Natural killer cell (primary cell): ENCODE measurements at regions of chr1 and their contacts with region 1.

Region 1: DNA sequence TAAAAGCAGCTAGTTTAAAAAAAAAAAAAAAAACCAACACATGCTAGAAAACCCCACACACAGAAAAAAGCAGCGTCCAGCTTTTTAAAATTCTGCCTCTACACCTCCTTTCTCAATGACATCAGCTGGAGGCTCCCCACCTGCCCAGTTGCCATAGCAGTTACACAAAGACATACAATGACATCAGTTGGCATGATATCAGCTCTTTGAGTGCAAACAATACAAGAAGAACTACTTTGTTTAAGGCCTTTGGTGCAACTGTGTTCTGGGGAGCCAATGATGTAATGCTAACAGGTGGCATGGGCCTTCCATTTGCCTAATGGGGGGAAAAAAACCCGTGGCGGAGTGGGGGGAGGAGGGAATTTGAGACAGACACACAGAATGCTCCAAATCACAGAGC is 32.9 kb downstream of the DUSP10 start:
- DNase-seq: peak; percentile 48 to 87
- ATAC-seq: peak; percentile 41 to 61 (median 54)
- H3K4me3 ChIP-seq: no peak overlapping the region
- H3K4me3 Mint-ChIP-seq: peak overlapping the region; percentile 62
- H3K27ac ChIP-seq: peak overlapping the region; percentile 83
- H3K27ac Mint-ChIP-seq: peak overlapping the region; percentile 91 to 99
- H3K4me1 ChIP-seq: peaks cover 57% of the 10 kb centered on the region
- H3K4me1 Mint-ChIP-seq: peaks cover 80 to 84% of the 10 kb centered on the region in 2 donors
- H3K27me3 ChIP-seq: no peaks in the 10 kb centered on the region
- H3K27me3 Mint-ChIP-seq: no peaks in the 10 kb centered on the region
- CTCF ChIP-seq: no peak

Region 2: GRCh38 chr1:221327954-221328353 is 381.0 kb before region 1 on chr1:
- intact Hi-C with region 1: no loop called
- DNase-seq: no peak
- ATAC-seq: no peak
- H3K4me3 ChIP-seq: no peak overlapping the region
- H3K4me3 Mint-ChIP-seq: no peak overlapping the region
- H3K27ac ChIP-seq: no peak overlapping the region
- H3K27ac Mint-ChIP-seq: no peak overlapping the region
- H3K4me1 ChIP-seq: no peaks in the 10 kb centered on the region
- H3K4me1 Mint-ChIP-seq: no peaks in the 10 kb centered on the region
- H3K27me3 ChIP-seq: no peaks in the 10 kb centered on the region
- H3K27me3 Mint-ChIP-seq: peaks cover 18 to 20% of the 10 kb centered on the region in 2 donors
- CTCF ChIP-seq: no peak

Region 3: GRCh38 chr1:221522529-221522940 is 186.5 kb before region 1 on chr1:
- intact Hi-C with region 1: loop called (anchors 1 kb)
- DNase-seq: no peak
- ATAC-seq: peak in 1 of 3 donors; percentile 42
- H3K4me3 ChIP-seq: no peak overlapping the region
- H3K4me3 Mint-ChIP-seq: no peak overlapping the region
- H3K27ac ChIP-seq: no peak overlapping the region
- H3K27ac Mint-ChIP-seq: peak overlapping the region; percentile 89 to 94
- H3K4me1 ChIP-seq: peaks cover 19% of the 10 kb centered on the region
- H3K4me1 Mint-ChIP-seq: peaks cover 24 to 25% of the 10 kb centered on the region in 2 donors
- H3K27me3 ChIP-seq: no peaks in the 10 kb centered on the region
- H3K27me3 Mint-ChIP-seq: no peaks in the 10 kb centered on the region
- CTCF ChIP-seq: no peak

Region 4: GRCh38 chr1:221725735-221726672 is 17.0 kb after region 1 on chr1:
- intact Hi-C with region 1: loop called (anchors 1 kb)
- DNase-seq: peak in 1 of 2 donors; percentile 45
- ATAC-seq: peak; percentile 46 to 77 (median 58)
- H3K4me3 ChIP-seq: no peak overlapping the region
- H3K4me3 Mint-ChIP-seq: peak overlapping the region; percentile 74
- H3K27ac ChIP-seq: peak overlapping the region; percentile 77
- H3K27ac Mint-ChIP-seq: peak overlapping the region; percentile 82 to 88
- H3K4me1 ChIP-seq: peaks cover 46% of the 10 kb centered on the region
- H3K4me1 Mint-ChIP-seq: peaks cover 81 to 91% of the 10 kb centered on the region in 2 donors
- H3K27me3 ChIP-seq: no peaks in the 10 kb centered on the region
- H3K27me3 Mint-ChIP-seq: no peaks in the 10 kb centered on the region
- CTCF ChIP-seq: no peak

Region 5: DNA sequence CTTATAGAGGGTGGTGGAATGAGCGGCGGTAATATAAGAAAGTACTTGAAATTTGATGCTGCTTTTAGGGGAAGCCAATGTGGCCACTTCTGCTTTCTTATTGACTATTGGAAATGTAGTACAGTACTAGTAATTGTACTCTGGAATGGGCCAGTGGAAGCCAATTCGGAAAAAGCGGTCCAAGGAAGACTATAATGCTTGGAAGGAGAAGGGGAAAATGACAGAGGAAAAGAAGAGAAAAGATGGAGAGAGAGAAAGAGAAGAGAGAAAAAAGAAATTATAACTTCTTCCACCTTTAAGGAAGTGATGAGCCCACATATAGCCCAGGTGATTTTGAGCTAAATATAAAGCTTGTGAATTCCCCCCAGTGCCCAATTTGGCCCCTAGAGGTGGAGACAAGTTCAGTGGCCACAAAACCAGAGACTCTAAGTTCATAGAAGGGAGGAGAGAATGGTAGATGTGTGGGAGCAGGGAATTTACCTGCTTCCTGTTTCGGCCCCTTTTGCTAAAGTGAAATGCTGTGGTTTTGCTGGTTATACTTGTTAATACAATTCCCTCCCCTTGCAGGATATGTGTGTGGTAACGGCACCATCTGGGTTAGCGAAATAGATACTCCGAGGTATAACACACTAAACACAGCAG is 68.6 kb after region 1 on chr1:
- intact Hi-C with region 1: loop called (anchors 1 kb)
- DNase-seq: peak; percentile 42 to 88
- ATAC-seq: peak; percentile 63 to 85 (median 81)
- H3K4me3 ChIP-seq: no peak overlapping the region
- H3K4me3 Mint-ChIP-seq: peak overlapping the region; percentile 68
- H3K27ac ChIP-seq: peak overlapping the region; percentile 84
- H3K27ac Mint-ChIP-seq: peak overlapping the region; percentile 90 to 99
- H3K4me1 ChIP-seq: peaks cover 62% of the 10 kb centered on the region
- H3K4me1 Mint-ChIP-seq: peaks cover 67 to 71% of the 10 kb centered on the region in 2 donors
- H3K27me3 ChIP-seq: no peaks in the 10 kb centered on the region
- H3K27me3 Mint-ChIP-seq: no peaks in the 10 kb centered on the region
- CTCF ChIP-seq: no peak

Region 6: DNA sequence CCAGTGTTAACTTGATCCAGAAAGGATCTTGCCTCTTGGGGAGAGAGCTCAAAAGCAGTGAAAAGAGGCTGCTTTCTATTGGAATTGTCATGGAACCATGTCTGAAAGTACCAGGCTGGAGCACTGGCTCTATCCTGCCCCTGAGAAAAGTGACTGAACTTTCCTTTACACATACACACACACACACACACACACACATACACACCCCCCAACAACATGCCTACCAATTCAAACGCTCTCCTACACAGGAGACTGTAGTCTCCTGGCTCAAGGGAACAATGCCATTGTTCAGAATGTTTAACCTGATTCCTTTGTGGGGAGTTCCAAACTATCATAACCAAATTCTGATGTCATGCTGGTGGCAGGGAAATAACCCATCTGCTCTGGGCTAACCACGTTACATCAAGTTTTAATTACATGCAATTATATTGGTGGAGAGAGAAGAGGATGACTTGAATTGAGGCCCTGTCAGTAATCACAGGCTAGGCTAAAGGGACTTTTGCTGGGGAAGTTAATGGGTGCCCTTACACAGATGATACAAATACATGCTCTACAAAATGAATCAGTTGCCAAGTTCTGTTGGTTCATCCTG is 85.2 kb after region 1 on chr1:
- intact Hi-C with region 1: loop called (anchors 1 kb)
- DNase-seq: peak in 1 of 2 donors; percentile 79
- ATAC-seq: peak; percentile 76 to 89 (median 82)
- H3K4me3 ChIP-seq: no peak overlapping the region
- H3K4me3 Mint-ChIP-seq: peak overlapping the region; percentile 65
- H3K27ac ChIP-seq: peak overlapping the region; percentile 57
- H3K27ac Mint-ChIP-seq: peak overlapping the region; percentile 88 to 90
- H3K4me1 ChIP-seq: peaks cover 16% of the 10 kb centered on the region
- H3K4me1 Mint-ChIP-seq: peaks cover 19 to 26% of the 10 kb centered on the region in 2 donors
- H3K27me3 ChIP-seq: no peaks in the 10 kb centered on the region
- H3K27me3 Mint-ChIP-seq: no peaks in the 10 kb centered on the region
- CTCF ChIP-seq: no peak

Region 7: DNA sequence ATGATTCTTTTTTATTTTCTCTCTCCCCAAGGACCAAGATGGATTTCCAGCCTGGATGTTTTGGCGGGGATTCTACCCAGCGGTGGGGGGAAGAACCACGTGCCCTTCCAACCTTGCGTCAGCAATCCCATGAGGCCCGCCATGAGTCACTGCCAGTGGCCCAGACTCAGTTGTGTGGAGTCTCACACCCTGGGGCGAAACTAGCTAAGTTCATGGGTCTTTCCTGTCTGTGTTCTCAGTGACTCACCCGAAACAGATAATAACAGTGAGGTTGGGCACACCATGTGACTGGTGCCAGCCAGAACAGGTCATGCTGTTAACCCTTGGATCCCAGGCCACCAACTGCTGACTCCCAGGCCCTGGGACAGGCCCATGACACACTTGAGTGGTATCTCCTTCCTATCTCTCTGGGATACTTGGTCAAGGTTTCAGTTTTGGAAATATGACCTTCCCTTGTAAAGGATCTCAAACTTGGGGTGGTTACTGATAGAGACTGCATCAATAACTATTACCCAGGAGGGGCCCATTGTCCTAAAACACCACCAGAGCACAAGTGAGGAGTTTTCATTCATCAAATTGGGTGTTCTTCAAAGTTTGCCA is 130.9 kb after region 1 on chr1:
- intact Hi-C with region 1: loop called (anchors 1 kb)
- DNase-seq: peak; percentile 82 to 86
- ATAC-seq: peak; percentile 82 to 94 (median 93)
- H3K4me3 ChIP-seq: no peak overlapping the region
- H3K4me3 Mint-ChIP-seq: peak overlapping the region; percentile 13
- H3K27ac ChIP-seq: peak overlapping the region; percentile 34
- H3K27ac Mint-ChIP-seq: peak overlapping the region; percentile 89 to 92
- H3K4me1 ChIP-seq: peaks cover 28% of the 10 kb centered on the region
- H3K4me1 Mint-ChIP-seq: peaks cover 37 to 43% of the 10 kb centered on the region in 2 donors
- H3K27me3 ChIP-seq: no peaks in the 10 kb centered on the region
- H3K27me3 Mint-ChIP-seq: peaks cover 0 to 3% of the 10 kb centered on the region in 2 donors
- CTCF ChIP-seq: no peak

Region 8: GRCh38 chr1:221961532-221962292 is 252.7 kb after region 1 on chr1:
- intact Hi-C with region 1: loop called (anchors 1 kb)
- DNase-seq: peak; percentile 46 to 68
- ATAC-seq: peak; percentile 79 to 99 (median 96)
- H3K4me3 ChIP-seq: no peak overlapping the region
- H3K4me3 Mint-ChIP-seq: no peak overlapping the region
- H3K27ac ChIP-seq: no peak overlapping the region
- H3K27ac Mint-ChIP-seq: peak overlapping the region; percentile 52 to 80
- H3K4me1 ChIP-seq: peaks cover 4% of the 10 kb centered on the region
- H3K4me1 Mint-ChIP-seq: peaks cover 14 to 17% of the 10 kb centered on the region in 2 donors
- H3K27me3 ChIP-seq: no peaks in the 10 kb centered on the region
- H3K27me3 Mint-ChIP-seq: no peaks in the 10 kb centered on the region
- CTCF ChIP-seq: no peak

Region 9: GRCh38 chr1:223153177-223154119 is 1444.5 kb after region 1 on chr1:
- intact Hi-C with region 1: no loop called
- DNase-seq: no peak
- ATAC-seq: no peak
- H3K4me3 ChIP-seq: no peak overlapping the region
- H3K4me3 Mint-ChIP-seq: no peak overlapping the region
- H3K27ac ChIP-seq: no peak overlapping the region
- H3K27ac Mint-ChIP-seq: no peak overlapping the region
- H3K4me1 ChIP-seq: no peaks in the 10 kb centered on the region
- H3K4me1 Mint-ChIP-seq: peaks cover 8 to 11% of the 10 kb centered on the region in 2 donors
- H3K27me3 ChIP-seq: no peaks in the 10 kb centered on the region
- H3K27me3 Mint-ChIP-seq: peaks cover 7 to 15% of the 10 kb centered on the region in 2 donors
- CTCF ChIP-seq: no peak